ENCODE measurements at regions of chr6 and their contacts with region 1.

Region 1: GRCh38 chr6:17706580-17707370 is at the start of gene NUP153:
- DNase-seq: peak; percentile 98 to 100 (median 99)
- H3K4me3 ChIP-seq: peak within 1 kb of the TSS; percentile 65 to 90 (median 83)
- H3K27ac ChIP-seq: peak within 1 kb of the TSS; percentile 96 to 99 (median 99)
- H3K4me1 ChIP-seq: peaks cover 28 to 40% of the 10 kb centered on the region in 2 donors
- H3K27me3 ChIP-seq: no peaks in the 10 kb centered on the region
- CTCF ChIP-seq: no peak
- POLR2A ChIP-seq: peak; percentile 88 to 96
- total RNA-seq, gene NUP153: 17.1 to 31.4 (median 29.5) TPM

Region 2: GRCh38 chr6:17599885-17600526 is 106.8 kb before region 1 on chr6 and contains the start of gene FAM8A1:
- intact Hi-C with region 1: loop called (anchors 5 to 10 kb)
- DNase-seq: peak; percentile 94 to 98 (median 96)
- H3K4me3 ChIP-seq: peak within 1 kb of the TSS; percentile 68 to 98 (median 82)
- H3K27ac ChIP-seq: peak within 1 kb of the TSS; percentile 80 to 95 (median 90)
- H3K4me1 ChIP-seq: peaks cover 5 to 22% of the 10 kb centered on the region in 2 donors
- H3K27me3 ChIP-seq: no peaks in the 10 kb centered on the region
- CTCF ChIP-seq: peak; percentile 33 to 84 (median 67)
- POLR2A ChIP-seq: peak; percentile 25 to 66
- total RNA-seq, gene FAM8A1: 20.6 to 33.1 (median 21.9) TPM